ENCODE measurements at regions of chr1 and their contacts with region 1.

Region 1: GRCh38 chr1:58652651-58653184 is 47.1 kb downstream of the MYSM1 start:
- ATAC-seq: peak; percentile 78 to 96 (median 90)
- H3K4me3 ChIP-seq: no peak overlapping the region
- H3K27ac ChIP-seq: no peak overlapping the region
- H3K4me1 ChIP-seq: peaks cover 17 to 19% of the 10 kb centered on the region in 2 donors

Region 2: DNA sequence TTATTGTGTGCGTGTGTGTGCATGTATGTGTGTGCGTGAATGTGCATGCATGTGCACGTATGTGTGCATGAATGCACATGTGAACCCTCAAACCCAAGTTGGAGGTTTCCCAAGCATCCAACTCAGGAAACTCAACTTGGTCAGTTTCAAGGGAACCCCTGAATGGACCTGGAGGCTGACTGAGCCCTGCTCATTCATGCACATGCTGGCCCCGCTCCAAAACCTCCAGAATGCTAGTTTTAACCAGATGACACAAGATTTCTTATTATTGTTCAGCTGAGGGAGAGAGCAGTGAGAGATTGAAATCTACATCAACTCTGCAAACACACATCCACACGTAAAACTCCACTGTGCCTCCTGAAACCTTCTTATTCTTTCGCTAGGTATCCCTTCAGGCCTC is 210.6 kb before region 1 on chr1:
- in situ Hi-C with region 1: no loop called
- ATAC-seq: peak in 6 of 8 experiments; percentile 29 to 68 (median 56)
- H3K4me3 ChIP-seq: no peak overlapping the region
- H3K27ac ChIP-seq: peak overlapping the region in 1 of 2 donors; percentile 22
- H3K4me1 ChIP-seq: peaks cover 30 to 54% of the 10 kb centered on the region in 2 donors

Region 3: DNA sequence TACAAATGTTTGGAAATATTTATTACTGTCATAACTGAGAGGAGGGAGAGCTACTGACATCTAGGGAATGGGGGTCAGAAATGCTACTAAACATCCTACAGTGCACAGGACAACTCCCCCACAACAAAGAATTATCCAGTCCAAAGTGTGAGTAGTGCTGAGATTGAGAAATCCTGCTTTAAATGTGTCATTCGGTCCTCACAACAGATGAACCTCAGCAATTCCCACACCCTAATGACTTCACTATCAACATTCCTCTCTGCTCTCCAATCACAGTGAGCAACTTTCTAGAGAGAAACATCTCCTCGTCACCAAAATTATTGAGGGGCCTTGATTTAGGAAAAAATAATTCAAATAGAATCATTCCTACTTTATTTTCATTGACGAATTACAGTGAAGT is 124.2 kb before region 1 on chr1:
- in situ Hi-C with region 1: loop called in 1 of 9 experiments (anchors 10 kb)
- ATAC-seq: peak in 2 of 8 experiments; percentile 96
- H3K4me3 ChIP-seq: no peak overlapping the region
- H3K27ac ChIP-seq: no peak overlapping the region
- H3K4me1 ChIP-seq: no peaks in the 10 kb centered on the region